PC-3 (cell line): ENCODE measurements at regions of chr4 and their contacts with region 1.

Region 1: GRCh38 chr4:86895692-86896488 is 3.7 kb upstream of the C4orf36 start:
- DNase-seq: peak; percentile 82
- ATAC-seq: no peak
- H3K4me3 ChIP-seq: no peak overlapping the region
- H3K27ac ChIP-seq: no peak overlapping the region
- H3K4me1 ChIP-seq: peaks cover 24% of the 10 kb centered on the region
- H3K27me3 ChIP-seq: no peaks in the 10 kb centered on the region
- CTCF ChIP-seq: peak; percentile 87

Region 2: GRCh38 chr4:86497980-86498862 is 397.7 kb before region 1 on chr4:
- CTCF ChIA-PET with region 1: no interaction called
- POLR2A ChIA-PET with region 1: interaction called, 6 read pairs
- intact Hi-C with region 1: loop called (anchors 1 kb)
- DNase-seq: peak; percentile 71
- ATAC-seq: peak; percentile 42
- H3K4me3 ChIP-seq: no peak overlapping the region
- H3K27ac ChIP-seq: peak overlapping the region; percentile 84
- H3K4me1 ChIP-seq: peaks cover 55% of the 10 kb centered on the region
- H3K27me3 ChIP-seq: no peaks in the 10 kb centered on the region
- CTCF ChIP-seq: peak; percentile 80

Region 3: GRCh38 chr4:86593688-86594558 is 302.0 kb before region 1 on chr4 and contains the start of gene PTPN13:
- CTCF ChIA-PET with region 1: no interaction called
- POLR2A ChIA-PET with region 1: no interaction called
- intact Hi-C with region 1: loop called (anchors 2 kb)
- DNase-seq: peak; percentile 97
- ATAC-seq: peak; percentile 90
- H3K4me3 ChIP-seq: peak within 1 kb of the TSS; percentile 98
- H3K27ac ChIP-seq: peak within 1 kb of the TSS; percentile 41
- H3K4me1 ChIP-seq: peaks cover 32% of the 10 kb centered on the region
- H3K27me3 ChIP-seq: no peaks in the 10 kb centered on the region
- CTCF ChIP-seq: no peak
- total RNA-seq, gene PTPN13: 12.1 and 16.2 TPM in 2 replicates

Region 4: DNA sequence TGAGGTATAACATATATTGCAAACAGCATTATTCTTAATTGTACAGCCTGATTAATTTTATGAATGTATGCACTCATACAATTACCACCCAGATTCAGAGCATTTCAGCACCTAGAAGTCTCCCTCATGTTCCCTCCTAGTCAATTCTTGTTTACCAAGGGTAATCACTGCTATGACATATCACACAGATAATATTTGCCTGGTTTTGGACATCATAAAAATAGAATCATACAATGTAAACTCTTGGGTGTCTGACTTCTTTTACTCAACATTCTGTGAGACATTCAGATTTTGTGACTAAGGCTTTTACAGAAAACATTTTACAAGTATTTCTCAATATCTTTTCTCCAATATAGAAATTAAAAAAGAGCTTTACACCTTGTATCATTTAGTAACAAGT is 234.9 kb before region 1 on chr4:
- CTCF ChIA-PET with region 1: no interaction called
- POLR2A ChIA-PET with region 1: no interaction called
- intact Hi-C with region 1: no loop called
- DNase-seq: peak; percentile 54
- ATAC-seq: peak; percentile 86
- H3K4me3 ChIP-seq: no peak overlapping the region
- H3K27ac ChIP-seq: no peak overlapping the region
- H3K4me1 ChIP-seq: peaks cover 13% of the 10 kb centered on the region
- H3K27me3 ChIP-seq: no peaks in the 10 kb centered on the region
- CTCF ChIP-seq: no peak

Region 5: DNA sequence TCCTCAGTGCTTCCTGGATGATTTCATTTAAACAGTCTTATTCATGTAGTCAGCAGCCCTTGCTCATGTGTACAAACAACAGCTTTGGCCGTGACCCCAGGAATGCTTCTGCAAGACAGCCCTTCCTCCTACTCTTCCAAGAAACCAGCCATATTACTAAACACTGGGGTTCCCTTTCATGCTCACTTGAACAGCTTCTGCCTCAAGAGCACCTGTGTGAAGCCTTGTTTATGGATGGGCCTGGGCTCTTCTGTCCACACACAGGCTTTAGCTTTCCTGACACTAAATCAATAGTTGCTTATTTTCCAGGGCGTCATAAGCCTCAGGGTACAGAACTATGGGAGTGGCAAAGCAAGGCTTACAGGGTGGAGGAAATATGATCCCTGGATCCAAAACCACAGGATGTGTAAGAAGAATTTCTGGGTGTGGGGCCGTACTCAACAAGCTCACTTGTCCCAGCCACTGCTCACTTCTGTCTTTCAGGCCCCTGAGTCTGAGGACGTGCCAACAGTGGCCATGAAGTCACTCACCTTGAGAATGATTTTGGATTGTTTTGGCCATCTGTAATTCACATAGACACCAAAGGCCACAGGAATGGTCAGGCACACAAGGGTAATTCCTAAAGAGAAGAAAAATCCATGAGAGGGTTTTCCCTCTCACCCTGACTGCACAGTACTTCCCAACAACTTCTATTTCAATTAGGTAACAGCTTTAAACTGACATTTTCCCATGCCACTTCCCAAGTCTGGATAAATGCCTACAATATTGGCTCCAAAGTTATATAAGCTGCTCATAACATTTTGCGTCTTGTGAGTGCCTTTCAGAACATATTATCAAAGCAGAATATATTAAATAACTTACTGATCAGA is 64.4 kb before region 1 on chr4:
- CTCF ChIA-PET with region 1: no interaction called
- POLR2A ChIA-PET with region 1: no interaction called
- intact Hi-C with region 1: loop called (anchors 1 kb)
- DNase-seq: peak; percentile 94
- ATAC-seq: peak; percentile 97
- H3K4me3 ChIP-seq: peak overlapping the region; percentile 34; the same call in 1 of the 2 replicates
- H3K27ac ChIP-seq: peak overlapping the region; percentile 97
- H3K4me1 ChIP-seq: peaks cover 27% of the 10 kb centered on the region
- H3K27me3 ChIP-seq: no peaks in the 10 kb centered on the region
- CTCF ChIP-seq: no peak

Region 6: DNA sequence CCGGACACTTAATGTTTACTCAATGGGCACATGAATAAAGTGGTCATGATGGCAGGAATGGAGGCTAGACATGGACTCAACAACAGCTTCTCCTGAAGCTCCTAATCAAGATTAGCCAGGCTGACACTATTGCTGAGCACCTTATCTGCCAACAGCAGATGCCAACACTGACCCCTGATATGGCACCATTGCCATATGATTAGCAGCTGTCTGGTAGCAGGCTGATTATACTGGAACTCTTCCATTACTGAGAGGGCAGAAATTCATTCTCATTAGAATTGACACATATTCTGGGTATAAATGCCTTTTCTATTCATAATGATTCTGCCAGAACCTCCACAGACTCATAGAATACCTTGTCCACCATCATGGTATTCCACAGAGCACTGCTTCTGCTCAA is 20.5 kb after region 1 on chr4:
- CTCF ChIA-PET with region 1: no interaction called
- POLR2A ChIA-PET with region 1: interaction called, 25 read pairs
- intact Hi-C with region 1: no loop called
- DNase-seq: no peak
- ATAC-seq: no peak
- H3K4me3 ChIP-seq: no peak overlapping the region
- H3K27ac ChIP-seq: no peak overlapping the region
- H3K4me1 ChIP-seq: no peaks in the 10 kb centered on the region
- H3K27me3 ChIP-seq: no peaks in the 10 kb centered on the region
- CTCF ChIP-seq: no peak

Region 7: DNA sequence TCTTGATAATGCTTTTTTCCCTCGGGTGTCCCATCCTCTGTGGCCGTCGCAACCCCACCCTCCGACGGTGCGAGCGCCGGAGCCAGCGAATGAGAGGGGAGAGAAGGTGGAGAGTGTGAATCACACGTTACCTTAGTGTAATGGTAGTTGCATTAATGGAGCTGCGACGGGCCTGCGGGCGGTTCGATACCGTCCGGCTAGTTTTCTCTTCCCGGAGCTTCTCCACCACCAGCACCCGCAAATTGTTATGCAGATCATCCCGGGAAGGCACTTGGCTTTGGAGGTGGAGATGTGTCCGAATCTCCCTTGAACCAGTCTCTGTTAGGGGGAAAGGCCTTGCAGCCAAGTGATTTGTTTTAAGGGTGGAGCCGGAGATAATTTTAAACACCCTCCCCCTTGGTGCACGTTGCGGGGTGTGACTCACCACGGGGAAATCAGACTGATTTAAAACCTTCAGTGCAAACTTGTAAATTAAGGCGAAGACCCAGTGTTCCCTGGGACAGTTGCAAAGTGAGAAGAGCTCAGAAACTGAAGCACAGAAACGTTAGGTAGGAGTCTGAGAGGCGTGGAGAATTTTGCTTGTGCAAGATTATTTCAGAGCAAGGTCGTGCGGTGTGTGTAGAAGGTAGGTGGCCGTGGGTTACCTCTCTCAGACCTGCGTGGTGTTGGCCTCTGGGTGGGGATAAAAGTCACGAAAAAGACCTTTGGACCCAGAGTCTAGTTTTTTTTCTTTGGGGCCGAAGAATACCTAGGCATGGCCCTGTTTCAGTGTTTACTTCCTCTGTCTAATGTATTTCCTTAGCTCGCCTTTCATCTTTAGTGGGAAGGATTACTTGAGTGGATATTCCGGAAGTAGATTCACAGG is 40.2 kb after region 1 on chr4:
- CTCF ChIA-PET with region 1: no interaction called
- POLR2A ChIA-PET with region 1: no interaction called
- intact Hi-C with region 1: no loop called
- DNase-seq: peak; percentile 77
- ATAC-seq: peak; percentile 53
- H3K4me3 ChIP-seq: peak overlapping the region; percentile 83
- H3K27ac ChIP-seq: peak overlapping the region; percentile 87
- H3K4me1 ChIP-seq: peaks cover 29% of the 10 kb centered on the region
- H3K27me3 ChIP-seq: no peaks in the 10 kb centered on the region
- CTCF ChIP-seq: no peak